ENCODE measurements at regions of chr20 and their contacts with region 1.

Region 1: DNA sequence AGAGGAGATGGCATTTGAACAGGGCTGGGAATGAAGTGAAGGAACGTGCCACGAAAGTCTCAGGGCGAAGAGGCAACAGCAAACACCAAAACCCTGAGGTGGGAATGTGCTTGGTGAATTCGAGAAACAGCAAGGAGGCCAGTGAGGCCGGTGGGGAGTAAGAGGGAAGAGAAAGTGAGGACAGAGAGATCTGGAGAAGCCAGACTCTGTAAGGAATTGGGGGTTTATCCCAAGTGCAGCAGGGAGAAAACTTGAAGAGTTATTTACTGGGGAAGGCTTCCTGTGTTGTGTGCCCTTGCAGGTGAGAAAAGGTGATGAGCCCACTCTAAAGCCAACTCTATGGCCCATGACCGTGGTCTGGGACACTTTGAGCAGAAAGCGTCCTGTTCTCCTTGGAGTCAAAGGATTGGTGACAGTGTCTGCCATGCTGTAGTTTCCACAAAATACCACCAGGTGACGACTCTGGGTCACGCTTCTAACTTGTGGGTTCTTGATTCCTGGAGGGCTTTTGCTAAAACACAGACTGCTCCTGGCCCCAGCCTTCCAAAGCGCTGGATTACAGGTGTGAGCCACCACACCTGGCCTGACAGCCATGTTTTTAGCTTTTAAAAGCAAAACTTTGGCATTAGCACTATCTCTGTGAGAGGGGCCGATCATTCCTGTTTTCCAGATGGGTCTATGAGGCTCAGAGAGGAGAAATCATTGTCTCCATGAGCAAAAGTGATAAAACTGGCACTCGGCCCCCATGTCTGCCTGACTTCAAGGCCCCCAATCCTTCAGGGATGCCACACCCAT is 18.0 kb upstream of the CSNK2A1 start:
- DNase-seq: peak; percentile 40 to 55
- ATAC-seq: peak; percentile 82 to 88
- H3K4me3 ChIP-seq: no peak overlapping the region
- H3K27ac ChIP-seq: no peak overlapping the region
- H3K4me1 ChIP-seq: peaks cover 0 to 6% of the 10 kb centered on the region in 2 donors
- H3K27me3 ChIP-seq: no peaks in the 10 kb centered on the region
- CTCF ChIP-seq: peak; percentile 89 to 98 (median 95)
- POLR2A ChIP-seq: no peak

Region 2: DNA sequence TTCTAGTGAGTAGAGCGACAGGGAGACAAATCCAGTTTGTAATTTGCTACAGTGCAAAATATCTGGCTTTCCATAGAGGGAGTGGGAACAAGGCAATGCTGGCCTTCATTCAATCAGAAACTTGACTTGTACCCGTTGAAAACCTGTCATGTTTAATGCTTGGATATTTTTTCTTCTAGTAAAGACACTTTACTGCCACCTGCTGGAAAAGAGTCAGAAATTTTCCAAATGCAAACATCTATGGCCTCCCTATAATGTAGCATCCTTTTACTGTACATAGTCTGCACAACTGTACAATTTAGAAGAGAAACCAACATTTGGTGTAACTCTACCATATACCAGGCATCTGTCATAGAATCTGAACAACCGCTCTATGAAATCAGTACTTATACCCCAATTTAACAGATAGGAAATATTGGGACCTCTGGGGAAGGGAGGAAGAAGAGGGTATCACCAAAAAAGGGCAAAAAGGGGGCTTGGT is 82.6 kb before region 1 on chr20:
- in situ Hi-C with region 1: no loop called
- intact Hi-C with region 1: no loop called
- DNase-seq: no peak
- ATAC-seq: peak; percentile 59 to 68
- H3K4me3 ChIP-seq: no peak overlapping the region
- H3K27ac ChIP-seq: no peak overlapping the region
- H3K4me1 ChIP-seq: peaks cover 0 to 4% of the 10 kb centered on the region in 2 donors
- H3K27me3 ChIP-seq: no peaks in the 10 kb centered on the region
- CTCF ChIP-seq: peak; percentile 56 to 74 (median 68)
- POLR2A ChIP-seq: no peak

Region 3: DNA sequence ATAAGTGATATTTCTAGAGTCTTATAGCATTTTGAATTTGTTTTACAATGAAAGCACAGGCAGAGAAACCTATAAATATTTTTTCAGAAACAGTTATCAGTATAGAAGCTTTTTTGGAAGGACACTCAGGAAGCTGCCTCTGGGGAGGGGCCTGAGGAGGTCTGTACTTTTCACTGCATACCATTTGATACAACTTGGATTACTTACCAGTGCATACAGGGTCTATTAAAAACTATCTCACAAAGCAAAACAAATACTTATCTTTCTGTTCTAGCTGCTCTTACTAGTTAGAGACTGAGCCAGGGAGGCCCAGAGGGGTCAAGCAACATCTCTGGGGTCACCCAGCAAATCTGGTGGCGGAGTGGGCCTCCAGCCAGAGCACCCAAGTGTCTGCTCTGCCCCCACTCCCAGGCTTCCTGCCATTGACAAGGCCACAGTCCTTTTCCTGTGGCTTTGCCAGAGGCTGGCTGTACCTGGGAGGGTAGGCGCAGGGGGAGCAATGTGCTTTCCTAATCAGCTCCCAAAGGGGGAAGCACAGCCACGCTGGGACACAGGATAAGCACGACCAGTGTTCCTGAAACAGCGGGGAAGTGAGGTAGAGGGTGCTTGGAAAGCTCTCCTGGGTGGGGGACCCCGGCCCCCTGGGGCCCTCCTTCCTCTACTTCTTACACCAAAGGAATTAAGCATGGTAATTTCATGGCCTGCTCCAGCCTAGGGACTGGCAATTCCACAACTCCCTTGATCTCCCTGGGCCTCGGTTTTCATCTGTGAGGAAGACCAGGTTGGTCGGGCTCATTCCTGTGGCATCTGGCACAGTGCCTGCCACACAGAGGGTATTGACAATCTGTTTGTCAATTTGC is 40.7 kb after region 1 on chr20:
- in situ Hi-C with region 1: no loop called
- intact Hi-C with region 1: no loop called
- DNase-seq: peak in 1 of 2 donors; percentile 16
- ATAC-seq: peak; percentile 52 to 62
- H3K4me3 ChIP-seq: no peak overlapping the region
- H3K27ac ChIP-seq: peak overlapping the region; percentile 68 to 83 (median 80)
- H3K4me1 ChIP-seq: peaks cover 0 to 20% of the 10 kb centered on the region in 2 donors
- H3K27me3 ChIP-seq: no peaks in the 10 kb centered on the region
- CTCF ChIP-seq: no peak
- POLR2A ChIP-seq: no peak

Region 4: DNA sequence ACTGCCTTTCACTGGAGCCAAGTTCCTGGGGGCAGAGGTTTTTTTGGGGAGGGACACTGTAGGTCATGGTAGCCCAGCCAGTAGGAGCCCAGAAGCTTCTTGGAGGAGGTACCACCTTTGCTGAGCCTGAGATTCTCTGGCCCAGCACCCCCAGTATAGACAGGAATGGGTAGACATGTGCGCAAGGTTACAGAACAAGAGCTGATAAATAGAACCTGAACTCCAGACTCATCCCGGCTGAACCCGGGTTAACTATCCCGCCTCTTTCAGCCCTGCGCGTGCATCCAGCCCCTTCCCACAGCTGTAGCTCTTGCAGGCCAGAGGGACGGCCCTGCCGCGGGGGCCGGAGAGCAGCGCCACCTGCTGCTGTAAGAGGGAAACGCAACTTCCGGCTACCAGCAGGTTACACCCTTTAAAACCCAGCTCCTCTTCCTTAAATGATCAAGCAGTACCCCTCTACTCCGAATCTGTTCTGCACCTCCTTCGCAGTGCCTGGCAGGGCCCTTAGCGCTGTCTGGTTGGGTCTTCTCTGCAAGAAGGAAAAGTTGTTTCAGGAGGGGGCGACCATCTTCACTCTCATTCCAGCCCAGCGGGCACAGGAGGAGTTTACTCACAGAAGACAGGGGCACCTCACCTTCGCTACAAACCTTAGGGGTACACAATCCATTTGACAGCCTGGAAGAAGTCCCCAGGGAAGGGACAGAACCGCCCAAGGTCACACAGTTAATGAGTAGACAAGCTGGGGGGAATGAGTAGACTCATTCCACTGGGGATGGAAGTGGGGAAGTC is 83.9 kb after region 1 on chr20:
- in situ Hi-C with region 1: loop called in 3 of 4 experiments (anchors 5 to 10 kb)
- intact Hi-C with region 1: loop called (anchors 1 kb)
- DNase-seq: peak in 1 of 2 donors; percentile 48
- ATAC-seq: peak; percentile 54 to 77
- H3K4me3 ChIP-seq: no peak overlapping the region
- H3K27ac ChIP-seq: peak overlapping the region; percentile 32 to 66 (median 58)
- H3K4me1 ChIP-seq: peaks cover 0 to 9% of the 10 kb centered on the region in 2 donors
- H3K27me3 ChIP-seq: peaks cover 0 to 14% (median 2%) of the 10 kb centered on the region in 3 donors
- CTCF ChIP-seq: peak; percentile 71 to 94 (median 89)
- POLR2A ChIP-seq: no peak

Region 5: DNA sequence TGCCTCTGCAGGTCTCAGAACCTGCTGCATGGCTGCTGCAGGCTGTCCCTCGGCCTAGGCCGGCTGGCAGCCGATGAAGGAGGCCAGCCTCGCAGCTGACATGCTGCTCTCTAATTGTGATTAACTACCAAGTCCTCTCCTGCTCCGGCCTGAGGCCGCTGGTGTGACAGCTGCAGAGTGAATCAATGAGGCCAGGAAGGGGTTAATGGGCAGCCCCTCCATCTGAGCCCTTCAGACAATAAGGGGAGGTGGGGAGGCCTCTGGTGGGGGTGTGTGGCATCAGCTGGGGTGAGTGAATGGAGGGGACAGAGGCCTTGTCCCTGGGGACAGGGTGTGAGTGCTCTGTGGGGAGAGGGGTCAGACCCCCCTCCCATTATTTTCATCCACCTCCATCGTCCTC is 172.2 kb after region 1 on chr20:
- in situ Hi-C with region 1: loop called (anchors 5 to 10 kb)
- intact Hi-C with region 1: loop called (anchors 1 kb)
- DNase-seq: no peak
- ATAC-seq: no peak
- H3K4me3 ChIP-seq: no peak overlapping the region
- H3K27ac ChIP-seq: no peak overlapping the region
- H3K4me1 ChIP-seq: no peaks in the 10 kb centered on the region
- H3K27me3 ChIP-seq: peaks cover 8 to 13% (median 12%) of the 10 kb centered on the region in 3 donors
- CTCF ChIP-seq: no peak
- POLR2A ChIP-seq: no peak

Region 6: GRCh38 chr20:739736-740135 is 178.1 kb after region 1 on chr20:
- in situ Hi-C with region 1: loop called (anchors 5 to 10 kb)
- intact Hi-C with region 1: loop called (anchors 1 kb)
- DNase-seq: no peak
- ATAC-seq: no peak
- H3K4me3 ChIP-seq: no peak overlapping the region
- H3K27ac ChIP-seq: no peak overlapping the region
- H3K4me1 ChIP-seq: no peaks in the 10 kb centered on the region
- H3K27me3 ChIP-seq: no peaks in the 10 kb centered on the region
- CTCF ChIP-seq: no peak
- POLR2A ChIP-seq: no peak